ENCODE measurements at regions of chr3 and their contacts with region 1.

Region 1: DNA sequence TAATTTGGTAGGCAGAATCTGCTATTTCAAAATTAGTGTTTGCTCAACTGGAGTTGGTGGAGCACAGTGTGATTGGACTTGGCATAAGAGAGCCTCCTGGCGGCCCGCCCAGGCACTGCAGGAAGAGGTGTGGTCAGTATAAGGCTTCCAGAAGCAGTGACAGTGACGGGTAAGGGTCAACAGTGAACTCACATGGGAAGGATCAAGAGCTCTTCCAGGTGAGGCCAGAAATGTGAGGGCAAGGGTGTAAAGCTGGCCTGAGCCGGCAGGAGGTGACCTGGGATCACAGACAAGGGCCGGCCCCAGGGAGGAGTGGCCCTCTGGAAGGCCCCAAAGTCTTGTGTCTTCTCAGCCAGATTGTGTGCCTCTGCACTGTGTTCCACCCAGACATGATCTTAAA is 93.2 kb upstream of the RNF7 start:
- DNase-seq: no peak
- H3K4me3 ChIP-seq: no peak overlapping the region
- H3K27ac ChIP-seq: no peak overlapping the region
- H3K27me3 ChIP-seq: no peaks in the 10 kb centered on the region
- CTCF ChIP-seq: peak; percentile 65

Region 2: DNA sequence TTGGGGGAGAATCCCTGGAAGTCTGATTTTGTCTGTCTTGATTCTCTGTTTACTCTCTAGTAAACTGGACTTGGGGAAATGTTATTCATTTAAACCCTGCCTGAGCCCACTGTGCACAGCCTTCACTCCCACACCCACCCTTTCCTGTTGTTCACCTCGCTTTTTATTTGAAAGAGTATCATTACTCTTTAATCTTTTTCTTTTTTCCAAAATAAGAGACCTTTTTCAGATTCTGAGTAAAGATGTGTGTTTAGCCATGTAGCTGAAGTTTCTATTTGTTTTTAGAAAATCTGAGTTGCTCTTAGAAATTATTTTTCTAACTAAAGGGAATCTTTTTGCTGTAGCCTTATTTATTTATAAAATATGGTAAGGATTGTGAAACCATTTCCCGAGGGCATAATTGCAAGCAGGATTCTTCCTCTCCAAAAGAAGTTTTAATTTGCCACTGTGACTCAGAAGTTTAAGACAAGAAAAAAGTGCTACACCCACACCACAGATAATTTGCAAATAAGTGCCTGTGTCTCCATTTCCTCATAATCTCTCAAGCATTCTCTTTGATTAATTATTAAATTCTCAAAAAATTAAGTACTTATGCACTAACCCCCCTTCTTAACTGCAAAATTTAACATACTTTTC is 114.7 kb before region 1 on chr3:
- CTCF ChIA-PET with region 1: no interaction called
- POLR2A ChIA-PET with region 1: no interaction called
- DNase-seq: peak; percentile 18
- H3K4me3 ChIP-seq: no peak overlapping the region
- H3K27ac ChIP-seq: peak overlapping the region; percentile 54
- H3K27me3 ChIP-seq: no peaks in the 10 kb centered on the region
- CTCF ChIP-seq: no peak

Region 3: DNA sequence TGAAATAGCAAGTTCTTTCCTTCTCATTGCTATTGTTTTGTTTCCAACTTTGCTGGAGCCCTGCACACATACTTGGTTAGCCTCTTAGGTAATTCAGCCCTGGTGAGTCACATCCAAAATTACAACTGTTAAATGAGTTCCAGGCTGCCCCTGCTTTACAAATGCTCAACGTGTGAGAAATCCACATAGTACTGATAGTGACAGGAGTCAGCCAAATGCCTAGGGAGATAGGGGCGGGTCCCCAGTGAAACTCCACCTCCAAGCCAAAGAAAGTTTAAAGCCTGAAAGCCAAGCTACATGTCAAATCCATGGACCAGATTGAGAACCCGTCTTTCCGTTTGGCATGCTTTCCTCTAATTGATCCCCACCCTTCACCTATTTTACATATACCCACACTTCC is 11.9 kb after region 1 on chr3:
- CTCF ChIA-PET with region 1: interaction called, 13 read pairs
- POLR2A ChIA-PET with region 1: no interaction called
- DNase-seq: no peak
- H3K4me3 ChIP-seq: no peak overlapping the region
- H3K27ac ChIP-seq: no peak overlapping the region
- H3K27me3 ChIP-seq: peaks cover 3% of the 10 kb centered on the region
- CTCF ChIP-seq: no peak

Measured in AG04450 (cell line).